ENCODE measurements at regions of chr6 and their contacts with region 1.

Region 1: DNA sequence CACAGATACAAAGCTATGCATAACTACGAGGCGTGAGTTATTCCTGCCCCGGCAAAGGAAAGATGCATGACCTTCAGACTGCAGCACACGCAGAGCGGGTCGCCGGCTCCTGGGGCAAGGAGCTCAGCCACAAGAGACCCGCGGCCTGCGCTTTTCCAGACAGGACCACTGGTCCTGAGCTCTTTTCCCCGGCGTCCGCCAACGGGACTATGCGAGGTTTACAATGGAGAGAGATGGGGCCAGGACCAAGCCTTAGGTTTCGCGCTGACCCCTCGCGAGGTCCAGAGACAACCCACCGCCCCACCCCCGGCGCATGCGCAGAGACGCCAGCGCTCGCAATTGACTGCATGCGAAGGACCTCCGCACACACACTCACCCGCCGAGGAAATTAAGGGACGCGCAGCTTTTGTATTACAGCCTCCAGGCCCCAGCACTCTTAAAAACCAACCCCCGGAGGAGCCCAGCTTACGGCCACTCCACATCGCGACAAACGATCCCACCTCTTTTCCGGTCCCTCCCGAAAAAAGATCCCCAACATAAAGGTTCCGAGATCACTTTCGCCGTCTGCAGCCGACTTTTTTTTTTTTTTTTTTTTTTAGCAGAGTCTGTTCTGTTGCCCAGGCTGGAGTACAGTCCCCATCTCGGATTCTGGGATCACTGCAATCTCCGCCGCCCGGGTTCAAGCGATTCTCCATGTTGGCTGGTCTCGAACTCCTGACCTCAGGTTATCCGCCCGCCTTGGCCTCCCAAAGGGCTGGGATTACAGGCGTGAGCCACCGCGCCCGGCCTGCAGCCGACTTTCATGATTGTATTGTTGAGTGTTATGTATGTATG is at the start of gene COQ3:
- DNase-seq: peak; percentile 74
- ATAC-seq: peak; percentile 84
- H3K4me3 Mint-ChIP-seq: peak within 1 kb of the TSS; percentile 95
- H3K27ac Mint-ChIP-seq: peak within 1 kb of the TSS; percentile 95
- H3K4me1 Mint-ChIP-seq: peaks cover 13% of the 10 kb centered on the region
- H3K27me3 Mint-ChIP-seq: no peaks in the 10 kb centered on the region
- CTCF ChIP-seq: no peak
- total RNA-seq, gene COQ3: 20.8 to 24.9 TPM

Region 2: GRCh38 chr6:99364026-99364425 is 29.9 kb before region 1 on chr6:
- CTCF ChIA-PET with region 1: no interaction called
- POLR2A ChIA-PET with region 1: no interaction called
- intact Hi-C with region 1: no loop called
- DNase-seq: no peak
- ATAC-seq: peak; percentile 18
- H3K4me3 Mint-ChIP-seq: no peak overlapping the region
- H3K27ac Mint-ChIP-seq: no peak overlapping the region
- H3K4me1 Mint-ChIP-seq: peaks cover 7% of the 10 kb centered on the region
- H3K27me3 Mint-ChIP-seq: peaks cover 9% of the 10 kb centered on the region
- CTCF ChIP-seq: no peak

Region 3: DNA sequence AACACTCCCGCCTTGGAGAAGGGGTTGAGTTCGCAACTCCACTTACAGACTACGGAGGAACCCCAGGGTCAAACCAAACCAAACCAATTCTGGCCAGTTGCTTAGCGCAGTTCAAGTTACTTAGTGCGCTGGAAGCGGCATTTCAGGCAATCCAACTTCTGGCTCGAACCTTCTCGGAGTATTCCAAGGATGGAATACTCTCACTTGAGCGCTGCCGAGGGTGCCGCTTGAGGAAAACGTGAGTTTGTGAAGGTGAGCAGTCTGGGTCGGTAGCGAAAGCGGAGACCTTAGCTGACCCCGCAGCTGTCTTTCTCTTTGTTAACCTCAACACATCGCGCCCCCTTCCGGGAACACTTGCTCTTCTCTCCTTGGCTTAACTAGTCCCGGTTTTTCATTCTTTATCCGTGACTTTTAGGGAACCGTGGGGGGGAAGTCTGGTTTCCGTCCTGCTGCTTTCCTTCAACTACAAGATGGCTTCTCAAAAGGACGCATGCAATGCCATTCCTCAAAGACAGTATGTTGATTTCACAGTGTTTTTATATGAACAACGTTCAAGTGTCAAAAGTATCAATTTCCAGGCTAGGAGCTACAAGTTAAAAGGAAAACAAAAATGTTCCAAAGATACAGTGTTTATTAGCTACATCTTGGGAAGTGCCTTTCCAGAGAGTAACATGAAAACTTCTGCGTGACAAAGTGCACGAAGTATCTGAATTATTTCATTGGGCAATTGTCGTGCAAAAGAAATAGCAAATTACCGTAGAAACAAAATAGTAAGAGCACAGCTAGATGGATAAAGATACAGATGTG is 31.9 kb after region 1 on chr6:
- CTCF ChIA-PET with region 1: interaction called, 4 read pairs
- POLR2A ChIA-PET with region 1: interaction called, 11 read pairs
- intact Hi-C with region 1: no loop called
- DNase-seq: peak; percentile 85
- ATAC-seq: peak; percentile 52
- H3K4me3 Mint-ChIP-seq: peak overlapping the region; percentile 79
- H3K27ac Mint-ChIP-seq: peak overlapping the region; percentile 100
- H3K4me1 Mint-ChIP-seq: peaks cover 54% of the 10 kb centered on the region
- H3K27me3 Mint-ChIP-seq: no peaks in the 10 kb centered on the region
- CTCF ChIP-seq: peak; percentile 46

Region 4: GRCh38 chr6:99485395-99485773 is 91.5 kb after region 1 on chr6:
- CTCF ChIA-PET with region 1: no interaction called
- POLR2A ChIA-PET with region 1: no interaction called
- intact Hi-C with region 1: no loop called
- DNase-seq: no peak
- ATAC-seq: no peak
- H3K4me3 Mint-ChIP-seq: no peak overlapping the region
- H3K27ac Mint-ChIP-seq: no peak overlapping the region
- H3K4me1 Mint-ChIP-seq: no peaks in the 10 kb centered on the region
- H3K27me3 Mint-ChIP-seq: no peaks in the 10 kb centered on the region
- CTCF ChIP-seq: no peak

Measured in activated CD8-positive, alpha-beta T cell treated with anti-CD3 and anti-CD28 coated beads for 36 hours (primary cell).